AG04450 (cell line): ENCODE measurements at regions of chr3 and their contacts with region 1.

Region 1: GRCh38 chr3:134326760-134327593 is 47.3 kb downstream of the AMOTL2 start:
- DNase-seq: peak; percentile 94
- H3K4me3 ChIP-seq: no peak overlapping the region
- H3K27ac ChIP-seq: peak overlapping the region; percentile 99
- H3K27me3 ChIP-seq: no peaks in the 10 kb centered on the region
- CTCF ChIP-seq: no peak

Region 2: GRCh38 chr3:134357261-134358184 is 30.5 kb after region 1 on chr3:
- CTCF ChIA-PET with region 1: interaction called, 4 read pairs
- POLR2A ChIA-PET with region 1: interaction called, 14 read pairs
- DNase-seq: peak; percentile 96
- H3K4me3 ChIP-seq: peak overlapping the region; percentile 13
- H3K27ac ChIP-seq: peak overlapping the region; percentile 98
- H3K27me3 ChIP-seq: no peaks in the 10 kb centered on the region
- CTCF ChIP-seq: no peak

Region 3: DNA sequence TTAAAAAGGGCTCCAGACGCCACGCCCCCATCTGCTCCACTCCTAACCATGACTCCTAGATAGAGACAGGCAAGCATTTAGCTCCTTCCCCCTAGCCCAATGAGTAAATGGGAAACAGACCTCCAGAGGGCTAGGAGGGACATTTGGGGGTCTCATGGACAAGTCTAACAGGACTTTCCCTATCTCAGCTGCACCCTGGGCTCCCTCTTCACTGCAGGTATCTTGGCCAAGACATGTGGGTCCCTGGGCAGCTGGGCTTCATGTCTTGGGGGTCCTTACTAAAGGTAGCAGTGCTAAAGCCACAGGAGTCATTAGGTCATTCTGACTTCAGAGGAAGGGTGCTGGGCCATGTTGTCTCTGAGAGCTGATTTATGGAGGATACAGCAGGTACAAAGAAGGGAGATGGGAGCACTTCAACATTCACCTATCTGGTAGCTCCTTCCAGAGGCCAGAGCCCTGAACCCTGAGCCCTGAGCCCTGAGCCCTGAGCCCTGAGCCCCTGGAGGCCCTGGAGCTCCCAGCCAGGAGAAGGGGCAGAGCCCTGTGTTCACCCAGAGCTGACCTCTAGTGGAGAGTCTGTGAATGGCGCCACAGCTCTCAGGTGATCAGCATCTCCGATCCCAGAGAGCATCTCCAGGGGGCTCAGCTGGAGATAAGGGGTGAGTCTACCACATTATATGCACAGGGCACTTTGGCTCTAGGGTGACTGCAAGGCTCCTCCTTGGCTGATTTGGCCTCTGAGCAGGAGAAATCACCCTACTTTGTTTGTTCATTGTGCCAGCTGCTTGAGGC is 428.0 kb after region 1 on chr3:
- CTCF ChIA-PET with region 1: no interaction called
- POLR2A ChIA-PET with region 1: no interaction called
- DNase-seq: no peak
- H3K4me3 ChIP-seq: no peak overlapping the region
- H3K27ac ChIP-seq: no peak overlapping the region
- H3K27me3 ChIP-seq: no peaks in the 10 kb centered on the region
- CTCF ChIP-seq: peak; percentile 84